CD14-positive monocyte (primary cell): ENCODE measurements at regions of chr19 and their contacts with region 1.

Region 1: DNA sequence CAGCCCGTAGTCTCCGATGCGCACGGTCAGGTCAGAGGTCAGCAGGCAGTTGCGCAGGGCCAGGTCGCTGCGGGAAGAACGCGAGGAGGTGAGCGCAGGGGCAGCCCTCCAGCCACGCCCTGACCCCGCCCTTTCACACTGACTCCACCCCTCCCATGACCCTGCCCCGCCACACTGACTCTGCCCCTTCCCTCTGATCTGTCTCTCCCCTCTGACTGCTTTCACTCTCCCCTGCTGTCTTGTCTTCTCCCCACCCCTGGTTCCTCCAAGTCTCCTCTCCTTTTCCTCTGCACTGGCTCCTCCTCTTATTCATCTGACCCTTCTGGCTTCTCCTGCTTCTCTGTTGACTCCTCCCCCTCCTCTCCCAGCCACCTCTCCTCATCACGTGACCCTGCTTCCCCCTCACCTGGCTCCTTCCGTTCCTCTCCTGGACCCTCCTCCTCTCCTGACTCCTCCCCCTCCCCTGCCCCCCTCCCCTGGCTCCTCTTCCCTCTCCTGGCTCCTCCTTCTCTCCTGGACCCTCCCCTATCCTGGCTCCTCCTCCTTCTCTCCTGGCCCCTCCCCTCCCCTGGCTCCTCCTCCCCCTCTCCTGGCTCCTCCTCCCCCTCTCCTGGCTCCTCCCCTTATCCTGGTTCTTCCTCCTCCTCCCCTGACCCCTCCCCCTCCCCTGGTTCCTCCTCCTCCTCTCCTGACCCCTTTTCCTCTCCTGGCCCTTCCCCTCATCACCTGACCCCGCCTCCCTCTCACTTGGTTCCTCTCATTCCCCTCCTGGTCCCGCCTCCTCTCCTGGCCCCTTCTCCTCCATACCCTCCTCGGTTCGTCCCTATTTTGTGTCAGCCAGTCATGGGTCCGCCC is 9.9 kb downstream of the LMTK3 start:
- DNase-seq: peak; percentile 64 to 80 (median 70)
- H3K4me3 ChIP-seq: peak overlapping the region in 1 of 3 experiments; percentile 37
- H3K4me3 Mint-ChIP-seq: peak overlapping the region; percentile 61 to 76
- H3K27ac ChIP-seq: no peak overlapping the region
- H3K27ac Mint-ChIP-seq: peak overlapping the region in 5 of 7 donors; percentile 23 to 89 (median 81)
- H3K4me1 ChIP-seq: peaks cover 9 to 19% of the 10 kb centered on the region in 2 donors
- H3K4me1 Mint-ChIP-seq: peaks cover 20% of the 10 kb centered on the region
- H3K27me3 ChIP-seq: peaks cover 13 to 38% of the 10 kb centered on the region in 2 donors
- H3K27me3 Mint-ChIP-seq: peaks cover 25 to 52% (median 31%) of the 10 kb centered on the region in 3 donors
- CTCF ChIP-seq: no peak

Region 2: DNA sequence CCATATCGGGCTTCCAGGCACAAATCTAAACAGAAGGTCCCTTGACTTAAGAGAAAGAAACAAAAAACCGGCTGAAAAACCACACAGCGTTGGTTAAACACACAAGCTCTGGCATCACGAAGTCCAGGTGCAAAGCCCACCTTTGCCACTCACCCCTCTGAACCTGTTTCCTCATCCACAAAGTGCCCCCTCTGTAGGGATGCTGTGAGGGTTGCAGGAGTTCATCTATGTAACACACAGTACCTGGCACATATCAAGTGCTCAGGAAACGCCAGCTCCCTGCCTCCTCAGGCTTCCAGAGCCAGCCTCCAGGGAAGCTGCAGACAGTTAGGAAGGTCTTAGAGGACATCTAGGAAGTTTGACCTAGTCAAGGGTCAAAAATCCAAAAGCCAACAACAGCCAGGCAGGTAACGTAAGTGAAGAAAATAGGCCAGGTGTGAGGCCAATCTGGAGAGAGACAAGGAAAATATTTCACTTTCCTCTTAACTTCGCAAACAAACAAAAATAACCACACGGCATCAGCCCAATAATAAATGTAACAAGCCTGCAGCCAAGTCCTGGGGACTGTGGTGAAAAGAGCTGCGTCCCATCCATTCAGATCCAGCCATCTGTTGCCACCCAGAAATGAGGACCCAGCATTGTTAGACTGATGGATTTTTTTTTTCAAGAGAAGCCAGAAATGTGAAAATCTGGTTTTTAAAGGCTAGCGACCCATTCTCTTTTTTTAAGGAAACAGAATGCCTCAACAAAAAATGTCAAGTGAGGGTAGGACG is 120.4 kb before region 1 on chr19:
- intact Hi-C with region 1: no loop called
- DNase-seq: no peak
- H3K4me3 ChIP-seq: no peak overlapping the region
- H3K4me3 Mint-ChIP-seq: no peak overlapping the region
- H3K27ac ChIP-seq: no peak overlapping the region
- H3K27ac Mint-ChIP-seq: peak overlapping the region in 3 of 7 donors; percentile 21 to 26 (median 26)
- H3K4me1 ChIP-seq: peaks cover 0 to 5% of the 10 kb centered on the region in 2 donors
- H3K4me1 Mint-ChIP-seq: peaks cover 10% of the 10 kb centered on the region
- H3K27me3 ChIP-seq: no peaks in the 10 kb centered on the region
- H3K27me3 Mint-ChIP-seq: peaks cover 0 to 4% (median 1%) of the 10 kb centered on the region in 3 donors
- CTCF ChIP-seq: no peak

Region 3: GRCh38 chr19:48588670-48589399 is 87.1 kb after region 1 on chr19:
- intact Hi-C with region 1: loop called (anchors 2 to 5 kb)
- DNase-seq: peak; percentile 83 to 90 (median 85)
- H3K4me3 ChIP-seq: peak overlapping the region; percentile 17 to 72 (median 41)
- H3K4me3 Mint-ChIP-seq: peak overlapping the region; percentile 83 to 96
- H3K27ac ChIP-seq: peak overlapping the region; percentile 56 to 64
- H3K27ac Mint-ChIP-seq: peak overlapping the region; percentile 57 to 92 (median 85)
- H3K4me1 ChIP-seq: peaks cover 13 to 15% of the 10 kb centered on the region in 2 donors
- H3K4me1 Mint-ChIP-seq: peaks cover 17% of the 10 kb centered on the region
- H3K27me3 ChIP-seq: no peaks in the 10 kb centered on the region
- H3K27me3 Mint-ChIP-seq: peaks cover 6 to 9% (median 9%) of the 10 kb centered on the region in 3 donors
- CTCF ChIP-seq: peak; percentile 95